ENCODE measurements at regions of chr4 and their contacts with region 1.

Region 1: DNA sequence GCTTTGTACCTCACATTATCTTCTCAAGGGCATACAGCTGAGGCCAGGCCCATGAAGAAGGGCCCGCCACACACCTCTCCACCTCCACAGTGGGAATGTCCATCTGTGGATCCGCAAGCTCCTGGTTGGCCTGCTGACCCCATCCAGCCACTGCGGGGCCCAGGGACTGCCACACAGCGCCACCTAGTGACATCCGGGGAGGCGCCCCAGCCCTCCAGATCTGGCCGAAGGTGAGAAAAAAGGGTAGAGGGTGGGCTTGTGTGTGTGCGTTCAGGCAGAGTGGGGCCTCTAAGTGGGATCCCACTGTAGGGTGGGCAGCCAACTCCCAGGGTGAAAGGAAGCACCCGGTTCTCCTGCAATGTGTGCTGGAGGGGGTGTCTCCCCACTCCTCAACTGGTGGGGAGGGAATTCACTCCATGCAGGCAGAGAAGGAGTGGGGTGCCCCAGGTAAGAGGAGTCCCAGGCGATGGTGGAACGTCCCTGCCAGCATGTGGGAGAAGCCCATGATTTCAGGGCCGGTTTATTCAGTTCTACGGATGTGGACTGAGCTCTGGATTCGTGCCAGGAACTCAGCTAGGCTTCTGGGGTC is 117.3 kb downstream of the ENPP6 start:
- DNase-seq: peak; percentile 93
- H3K4me3 ChIP-seq: no peak overlapping the region
- H3K27ac ChIP-seq: peak overlapping the region in 1 of 2 experiments; percentile 54; a peak in 2 of 4 replicates
- H3K4me1 ChIP-seq: peaks cover 0 to 60% of the 10 kb centered on the region in 2 experiments; a peak in 1 of 4 replicates
- H3K27me3 ChIP-seq: no peaks in the 10 kb centered on the region
- CTCF ChIP-seq: peak; percentile 83
- EP300 ChIP-seq: 0 out of 4 replicates have a peak, but pooled peaks of 1 of the 2 experiments have one; percentile 11
- RAD21 ChIP-seq: peak; percentile 96

Region 2: GRCh38 chr4:183840311-183840710 is 260.1 kb before region 1 on chr4:
- CTCF ChIA-PET with region 1: interaction called, 128 read pairs
- POLR2A ChIA-PET with region 1: interaction called, 4 read pairs
- DNase-seq: peak; percentile 77
- H3K4me3 ChIP-seq: peak overlapping the region in 1 of 2 experiments; percentile 42; a peak in 1 of 4 replicates
- H3K27ac ChIP-seq: no peak overlapping the region; a peak in 1 of 4 replicates
- H3K4me1 ChIP-seq: peaks cover 0 to 4% of the 10 kb centered on the region in 2 experiments; a peak in 1 of 4 replicates
- H3K27me3 ChIP-seq: no peaks in the 10 kb centered on the region
- CTCF ChIP-seq: peak; percentile 90
- EP300 ChIP-seq: peak in 1 of 2 experiments; percentile 29; a peak in 1 of 4 replicates
- RAD21 ChIP-seq: peak; percentile 100

Region 3: DNA sequence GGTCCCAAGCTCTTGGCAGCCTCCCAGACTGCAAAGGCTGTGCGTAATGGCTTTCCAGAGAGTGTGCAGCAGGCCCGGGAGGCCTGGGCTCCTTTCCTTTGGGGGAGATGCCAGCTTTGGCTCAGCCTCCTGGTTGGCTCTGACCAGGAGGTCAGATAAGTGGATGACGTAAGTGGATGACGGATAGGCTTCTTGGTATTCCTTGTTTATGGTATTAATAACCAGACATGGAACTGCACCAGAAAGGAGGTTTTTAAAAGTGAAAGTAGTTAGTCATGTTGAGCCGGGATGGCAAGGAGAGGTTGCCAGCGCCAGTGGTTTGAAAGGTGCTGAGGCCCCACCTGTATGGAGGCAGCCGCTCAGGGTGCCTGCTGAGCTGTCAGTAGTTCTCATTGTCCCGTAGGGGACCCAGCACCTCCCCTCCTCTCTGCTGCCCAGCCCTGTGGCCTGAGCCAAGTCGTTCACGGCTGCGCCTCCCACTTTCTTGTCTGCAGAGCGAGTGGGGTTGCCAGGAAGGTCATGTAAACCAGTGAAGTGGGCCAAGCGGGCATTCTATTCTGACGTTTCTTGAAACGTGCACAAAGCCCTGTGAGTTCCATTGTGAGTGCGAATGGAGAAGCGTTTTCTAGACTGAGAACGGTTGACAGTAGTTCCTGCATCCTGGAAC is 224.0 kb before region 1 on chr4:
- CTCF ChIA-PET with region 1: interaction called, 15 read pairs
- POLR2A ChIA-PET with region 1: no interaction called
- DNase-seq: peak; percentile 88
- H3K4me3 ChIP-seq: peak overlapping the region; percentile 37 to 49
- H3K27ac ChIP-seq: peak overlapping the region in 1 of 2 experiments; percentile 92; a peak in 3 of 4 replicates
- H3K4me1 ChIP-seq: peaks cover 5 to 38% of the 10 kb centered on the region in 2 experiments; a peak in 1 of 4 replicates
- H3K27me3 ChIP-seq: no peaks in the 10 kb centered on the region
- CTCF ChIP-seq: no peak
- EP300 ChIP-seq: peak in 1 of 2 experiments; percentile 65; a peak in 2 of 4 replicates
- RAD21 ChIP-seq: peak; percentile 15; the same call in 1 of the 2 replicates

Region 4: DNA sequence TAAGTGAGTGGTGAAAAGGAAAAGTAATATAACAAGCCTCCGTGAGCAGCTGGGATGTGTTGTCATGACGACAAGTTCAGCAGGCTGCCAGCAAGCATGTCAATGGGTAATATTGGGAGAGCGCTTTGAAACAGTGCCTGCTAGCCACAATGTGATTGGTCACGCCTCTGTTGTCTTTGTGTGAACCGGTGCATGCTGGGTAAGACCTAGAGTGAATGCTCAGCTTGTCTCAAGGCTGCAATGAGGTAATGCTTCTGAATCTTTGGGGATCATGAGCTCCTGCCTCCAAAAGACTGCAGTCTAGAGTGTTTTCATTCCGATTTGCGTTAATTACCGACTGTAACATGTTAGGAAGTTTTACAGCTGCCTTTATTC is 140.4 kb before region 1 on chr4:
- CTCF ChIA-PET with region 1: interaction called, 10 read pairs
- POLR2A ChIA-PET with region 1: interaction called, 6 read pairs
- DNase-seq: peak; percentile 78
- H3K4me3 ChIP-seq: peak overlapping the region; percentile 41 to 53
- H3K27ac ChIP-seq: peak overlapping the region in 1 of 2 experiments; percentile 85; a peak in 2 of 4 replicates
- H3K4me1 ChIP-seq: peaks cover 0 to 33% of the 10 kb centered on the region in 2 experiments; a peak in 2 of 4 replicates
- H3K27me3 ChIP-seq: no peaks in the 10 kb centered on the region
- CTCF ChIP-seq: no peak
- EP300 ChIP-seq: 0 out of 4 replicates have a peak, but pooled peaks of 1 of the 2 experiments have one; percentile 23
- RAD21 ChIP-seq: 0 out of 2 replicates have a peak, but pooled peaks have one; percentile 2

Region 5: GRCh38 chr4:184111233-184111832 is 10.9 kb after region 1 on chr4:
- CTCF ChIA-PET with region 1: interaction called, 23 read pairs
- POLR2A ChIA-PET with region 1: no interaction called
- DNase-seq: no peak
- H3K4me3 ChIP-seq: no peak overlapping the region
- H3K27ac ChIP-seq: no peak overlapping the region
- H3K4me1 ChIP-seq: no peaks in the 10 kb centered on the region; a peak in 1 of 4 replicates
- H3K27me3 ChIP-seq: no peaks in the 10 kb centered on the region
- CTCF ChIP-seq: no peak
- EP300 ChIP-seq: no peak
- RAD21 ChIP-seq: no peak

Region 6: DNA sequence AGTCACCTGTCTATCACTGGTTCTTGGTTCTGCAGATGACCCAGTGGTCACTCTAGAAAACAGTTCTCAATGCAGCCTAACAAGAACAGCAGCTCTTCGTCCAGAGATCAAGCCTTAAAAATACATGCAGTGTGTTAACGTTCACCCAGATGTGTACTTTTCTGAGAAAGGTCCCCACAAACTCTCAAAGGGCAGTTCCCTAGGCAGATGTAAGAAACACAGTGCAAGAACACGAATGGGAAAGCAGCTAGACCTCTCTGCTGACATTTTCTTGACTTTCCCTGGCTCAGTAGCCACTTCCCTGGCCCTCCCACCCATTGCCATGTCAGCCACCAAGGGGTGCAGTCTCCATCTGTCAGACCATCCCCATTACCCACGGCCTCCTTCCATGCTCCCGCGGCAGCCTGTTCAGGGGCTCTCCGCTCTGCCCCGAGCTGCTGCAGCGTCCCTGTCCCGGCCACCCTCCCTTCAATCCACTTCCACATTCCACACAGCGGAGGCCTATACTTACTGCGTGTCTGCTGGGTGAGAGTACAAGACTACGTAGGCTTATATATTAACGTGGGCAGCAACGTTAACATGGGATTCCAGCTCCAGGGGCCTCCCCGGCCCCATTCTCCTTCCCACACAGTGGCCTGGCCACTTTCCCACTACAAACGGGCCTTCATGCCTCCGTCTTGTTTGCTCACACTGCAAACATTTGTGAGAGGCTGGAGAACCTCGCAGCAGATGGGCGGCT is 339.6 kb after region 1 on chr4:
- CTCF ChIA-PET with region 1: no interaction called
- POLR2A ChIA-PET with region 1: no interaction called
- DNase-seq: no peak
- H3K4me3 ChIP-seq: no peak overlapping the region
- H3K27ac ChIP-seq: no peak overlapping the region
- H3K4me1 ChIP-seq: peaks cover 3 to 27% of the 10 kb centered on the region in 2 experiments; a peak in 2 of 4 replicates
- H3K27me3 ChIP-seq: no peaks in the 10 kb centered on the region
- CTCF ChIP-seq: no peak
- EP300 ChIP-seq: no peak
- RAD21 ChIP-seq: no peak

Region 7: GRCh38 chr4:184453365-184454160 is 353.2 kb after region 1 on chr4:
- CTCF ChIA-PET with region 1: no interaction called
- POLR2A ChIA-PET with region 1: no interaction called
- DNase-seq: no peak
- H3K4me3 ChIP-seq: peak overlapping the region in 1 of 2 experiments; percentile 36; a peak in 2 of 4 replicates
- H3K27ac ChIP-seq: peak overlapping the region; percentile 72 to 95
- H3K4me1 ChIP-seq: peaks cover 37 to 54% of the 10 kb centered on the region in 2 experiments; a peak in 3 of 4 replicates
- H3K27me3 ChIP-seq: no peaks in the 10 kb centered on the region
- CTCF ChIP-seq: no peak
- EP300 ChIP-seq: no peak
- RAD21 ChIP-seq: no peak